ENCODE measurements at regions of chr2 and their contacts with region 1.

Region 1: DNA sequence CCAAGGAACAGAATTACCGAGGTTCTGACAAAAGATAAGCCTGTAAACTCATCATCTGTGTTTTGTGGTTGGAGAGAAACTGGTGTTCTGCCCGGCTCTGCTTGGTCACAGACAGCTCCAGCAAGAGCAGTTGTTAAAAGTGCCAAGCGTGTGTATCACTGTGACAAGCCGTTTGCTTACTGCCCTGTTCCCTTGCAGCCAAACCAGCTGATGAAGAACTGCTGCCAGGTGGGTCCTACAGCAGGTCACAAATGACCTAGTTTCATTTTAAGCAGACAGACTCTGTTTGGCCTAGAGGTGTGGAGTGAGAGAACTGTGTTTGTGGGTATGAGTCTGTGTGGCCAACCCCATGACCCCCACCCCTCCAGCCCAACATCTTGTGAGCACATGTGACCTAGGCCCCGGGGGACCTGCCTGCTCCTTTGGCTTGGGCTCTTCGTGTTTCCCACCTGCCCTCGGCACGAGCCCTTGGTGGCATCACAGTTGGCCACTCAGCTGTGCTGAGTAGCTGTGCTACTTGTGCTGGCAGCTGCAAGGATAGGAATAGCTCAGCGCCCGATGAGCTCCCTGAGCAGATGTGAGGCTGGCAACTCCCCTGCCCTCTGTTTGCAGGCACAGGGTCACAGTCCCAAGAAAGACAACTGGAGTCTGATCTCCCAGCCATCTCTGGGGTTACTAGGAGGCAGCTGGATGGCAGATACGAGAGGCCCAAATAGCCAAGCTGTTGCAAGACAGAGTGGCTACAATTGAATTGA is 9.7 kb downstream of the OXER1 start:
- DNase-seq: peak; percentile 72
- H3K4me3 ChIP-seq: no peak overlapping the region
- H3K27ac ChIP-seq: peak overlapping the region in 1 of 2 experiments; percentile 25; a peak in 1 of 4 replicates
- H3K4me1 ChIP-seq: peaks cover 0 to 38% of the 10 kb centered on the region in 2 experiments; a peak in 1 of 4 replicates
- H3K27me3 ChIP-seq: no peaks in the 10 kb centered on the region
- CTCF ChIP-seq: no peak
- EP300 ChIP-seq: 0 out of 4 replicates have a peak, but pooled peaks of 1 of the 2 experiments have one; percentile 31
- RAD21 ChIP-seq: no peak

Region 2: GRCh38 chr2:42743413-42743972 is 10.7 kb before region 1 on chr2:
- CTCF ChIA-PET with region 1: interaction called, 17 read pairs
- POLR2A ChIA-PET with region 1: no interaction called
- DNase-seq: no peak
- H3K4me3 ChIP-seq: no peak overlapping the region
- H3K27ac ChIP-seq: no peak overlapping the region
- H3K4me1 ChIP-seq: no peaks in the 10 kb centered on the region
- H3K27me3 ChIP-seq: no peaks in the 10 kb centered on the region
- CTCF ChIP-seq: no peak
- EP300 ChIP-seq: no peak
- RAD21 ChIP-seq: no peak

Region 3: DNA sequence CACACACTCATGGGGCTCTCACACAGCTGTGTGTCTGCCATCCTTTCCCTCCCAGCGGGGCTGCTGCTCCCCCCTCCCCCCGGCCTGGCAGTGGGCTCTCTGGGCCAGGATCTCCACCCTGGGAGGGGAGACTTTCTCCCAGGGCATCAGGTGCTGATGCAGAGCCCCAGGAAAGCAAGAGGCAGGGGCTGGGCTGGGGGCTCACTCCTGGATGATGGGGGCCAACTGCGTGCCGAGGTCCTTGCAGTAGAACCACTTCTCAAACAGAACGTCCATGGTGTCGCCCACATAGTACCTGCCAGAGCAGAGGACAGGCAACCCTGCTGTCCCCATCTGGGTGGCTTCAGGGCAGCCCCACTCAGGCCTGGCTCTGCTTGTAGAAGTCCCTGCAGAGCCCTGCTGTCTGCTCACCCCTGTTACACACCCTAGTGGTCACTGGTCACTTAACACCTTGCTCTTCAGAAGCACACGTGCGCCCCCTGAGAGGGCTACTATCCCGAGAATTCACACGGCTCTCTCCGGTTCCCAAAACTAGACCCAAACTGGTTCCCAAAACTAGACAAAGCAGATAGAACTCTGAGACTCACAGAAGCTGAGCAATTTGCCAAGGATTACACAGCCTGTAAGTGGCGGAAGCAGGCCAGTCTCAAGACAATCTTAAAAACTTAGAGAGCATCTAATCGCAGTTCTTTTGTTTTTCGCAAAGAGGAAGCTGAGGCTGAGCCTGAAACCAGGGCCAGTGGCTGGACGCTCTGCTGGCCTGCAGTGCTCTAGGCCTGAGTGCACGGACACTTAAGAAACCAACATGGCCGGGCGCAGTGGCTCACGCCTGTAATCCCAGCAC is 16.3 kb after region 1 on chr2:
- CTCF ChIA-PET with region 1: interaction called, 34 read pairs
- POLR2A ChIA-PET with region 1: interaction called, 3 read pairs
- DNase-seq: peak; percentile 92
- H3K4me3 ChIP-seq: no peak overlapping the region
- H3K27ac ChIP-seq: no peak overlapping the region; a peak in 1 of 4 replicates
- H3K4me1 ChIP-seq: peaks cover 0 to 21% of the 10 kb centered on the region in 2 experiments; a peak in 1 of 4 replicates
- H3K27me3 ChIP-seq: no peaks in the 10 kb centered on the region
- CTCF ChIP-seq: peak; percentile 56
- EP300 ChIP-seq: no peak
- RAD21 ChIP-seq: peak; percentile 84

Measured in SK-N-SH (cell line).